ENCODE measurements at regions of chr12 and their contacts with region 1.

Region 1: GRCh38 chr12:112496496-112496895 is 77.7 kb downstream of the PTPN11 start:
- DNase-seq: peak; percentile 55
- ATAC-seq: peak; percentile 97
- H3K4me3 Mint-ChIP-seq: no peak overlapping the region
- H3K27ac Mint-ChIP-seq: no peak overlapping the region
- H3K4me1 Mint-ChIP-seq: peaks cover 18% of the 10 kb centered on the region
- H3K27me3 Mint-ChIP-seq: no peaks in the 10 kb centered on the region

Region 2: GRCh38 chr12:112430929-112431328 is 65.6 kb before region 1 on chr12:
- CTCF ChIA-PET with region 1: no interaction called
- POLR2A ChIA-PET with region 1: no interaction called
- intact Hi-C with region 1: loop called in 1 of 2 experiments (anchors 5 kb)
- DNase-seq: peak; percentile 51
- ATAC-seq: peak; percentile 91
- H3K4me3 Mint-ChIP-seq: peak overlapping the region; percentile 1
- H3K27ac Mint-ChIP-seq: peak overlapping the region; percentile 81
- H3K4me1 Mint-ChIP-seq: peaks cover 35% of the 10 kb centered on the region
- H3K27me3 Mint-ChIP-seq: no peaks in the 10 kb centered on the region

Measured in activated CD4-positive, alpha-beta T cell treated with anti-CD3 and anti-CD28 coated beads for 36 hours (primary cell).